Breast epithelium (tissue), 4 donors: ENCODE measurements at regions of chr19 and their contacts with region 1.

Region 1: GRCh38 chr19:30288911-30289310 is 83.3 kb upstream of the ZNF536 start:
- DNase-seq: no peak
- H3K4me3 ChIP-seq: no peak overlapping the region
- H3K27ac ChIP-seq: no peak overlapping the region
- H3K4me1 ChIP-seq: no peaks in the 10 kb centered on the region
- H3K27me3 ChIP-seq: peaks cover 0 to 4% of the 10 kb centered on the region in 2 donors
- CTCF ChIP-seq: no peak
- POLR2A ChIP-seq: no peak

Region 2: DNA sequence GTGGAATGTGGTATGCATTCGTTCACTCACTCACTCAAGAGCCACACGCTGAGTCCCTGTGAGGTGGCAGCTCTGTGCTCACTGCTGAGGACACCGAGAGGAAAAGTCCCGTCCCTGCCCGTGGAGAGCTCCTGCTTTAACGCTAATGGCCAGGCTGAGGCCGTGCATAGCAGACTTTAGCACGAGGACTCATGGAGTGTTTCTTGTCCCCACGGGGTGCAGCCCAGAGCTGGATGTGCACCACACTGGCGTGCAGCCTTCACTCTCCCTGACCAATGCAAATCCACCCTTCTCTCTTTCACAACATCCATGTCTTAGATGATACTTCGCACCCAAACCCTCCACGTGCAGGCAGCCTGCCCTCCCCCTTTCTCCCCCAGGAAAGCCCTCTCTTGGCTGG is 76.3 kb before region 1 on chr19:
- intact Hi-C with region 1: loop called (anchors 2 kb)
- DNase-seq: no peak
- H3K4me3 ChIP-seq: no peak overlapping the region
- H3K27ac ChIP-seq: no peak overlapping the region
- H3K4me1 ChIP-seq: no peaks in the 10 kb centered on the region
- H3K27me3 ChIP-seq: peaks cover 0 to 35% of the 10 kb centered on the region in 2 donors
- CTCF ChIP-seq: no peak
- POLR2A ChIP-seq: no peak

Region 3: GRCh38 chr19:30253581-30253996 is 35.3 kb before region 1 on chr19:
- intact Hi-C with region 1: no loop called
- DNase-seq: no peak
- H3K4me3 ChIP-seq: no peak overlapping the region
- H3K27ac ChIP-seq: no peak overlapping the region
- H3K4me1 ChIP-seq: no peaks in the 10 kb centered on the region
- H3K27me3 ChIP-seq: peaks cover 0 to 49% of the 10 kb centered on the region in 2 donors
- CTCF ChIP-seq: no peak
- POLR2A ChIP-seq: no peak

Region 4: GRCh38 chr19:30529876-30530275 is 241.0 kb after region 1 on chr19:
- intact Hi-C with region 1: loop called (anchors 5 kb)
- DNase-seq: no peak
- H3K4me3 ChIP-seq: no peak overlapping the region
- H3K27ac ChIP-seq: no peak overlapping the region
- H3K4me1 ChIP-seq: no peaks in the 10 kb centered on the region
- H3K27me3 ChIP-seq: peaks cover 0 to 6% of the 10 kb centered on the region in 2 donors
- CTCF ChIP-seq: no peak
- POLR2A ChIP-seq: no peak

Region 5: GRCh38 chr19:31627620-31628361 is 1338.9 kb after region 1 on chr19:
- intact Hi-C with region 1: no loop called
- DNase-seq: no peak
- H3K4me3 ChIP-seq: no peak overlapping the region
- H3K27ac ChIP-seq: no peak overlapping the region
- H3K4me1 ChIP-seq: no peaks in the 10 kb centered on the region
- H3K27me3 ChIP-seq: peaks cover 0 to 9% of the 10 kb centered on the region in 2 donors
- CTCF ChIP-seq: no peak
- POLR2A ChIP-seq: no peak